ENCODE measurements at regions of chr7 and their contacts with region 1.

Region 1: DNA sequence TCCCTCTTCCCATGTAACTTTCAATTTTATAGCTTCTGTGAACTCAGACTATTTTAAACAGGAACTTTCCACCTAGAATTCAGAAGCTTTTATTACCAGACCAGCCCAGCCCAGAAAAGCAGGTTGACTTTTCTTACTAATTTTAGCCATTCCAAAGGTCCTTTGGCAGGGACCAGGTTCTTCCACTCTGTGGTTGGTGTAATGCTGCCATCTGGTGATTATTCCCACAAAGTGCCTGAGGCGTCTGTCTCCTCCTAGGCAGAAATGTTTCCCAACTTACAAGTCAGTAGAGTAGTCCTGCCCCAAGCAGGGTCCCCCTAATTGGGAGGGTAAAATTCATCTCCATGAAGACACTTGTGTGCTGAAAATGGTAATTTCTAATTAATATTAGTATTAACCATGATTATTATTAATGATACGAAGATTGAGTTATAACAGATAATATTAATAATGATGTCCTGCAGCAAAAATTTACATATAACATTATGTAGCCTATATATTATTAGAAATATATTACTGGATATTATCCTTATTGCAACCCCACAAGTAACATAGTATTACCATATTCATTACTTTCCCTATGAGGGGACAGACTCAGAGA is 53.0 kb upstream of the PPP1R17 start:
- DNase-seq: no peak
- ATAC-seq: peak; percentile 66; the same call in 2 of the 3 replicates
- H3K4me3 ChIP-seq: no peak overlapping the region
- H3K27ac ChIP-seq: no peak overlapping the region
- H3K4me1 ChIP-seq: no peaks in the 10 kb centered on the region
- H3K27me3 ChIP-seq: no peaks in the 10 kb centered on the region; a peak in 1 of 4 replicates
- CTCF ChIP-seq: peak; percentile 34 to 54 (median 48); a peak in 4 of 6 replicates
- EP300 ChIP-seq: no peak
- POLR2A ChIP-seq: no peak
- RAD21 ChIP-seq: peak; percentile 61

Region 2: GRCh38 chr7:31134246-31135188 is 499.5 kb before region 1 on chr7:
- CTCF ChIA-PET with region 1: interaction called, 9 read pairs
- POLR2A ChIA-PET with region 1: no interaction called
- RAD21 ChIA-PET with region 1: interaction called, 3 read pairs
- SMC1A ChIA-PET with region 1: interaction called, 5 read pairs
- in situ Hi-C with region 1: no loop called
- intact Hi-C with region 1: loop called (anchors 2 kb)
- DNase-seq: no peak
- ATAC-seq: peak; percentile 97
- H3K4me3 ChIP-seq: no peak overlapping the region
- H3K27ac ChIP-seq: no peak overlapping the region
- H3K4me1 ChIP-seq: no peaks in the 10 kb centered on the region
- H3K27me3 ChIP-seq: no peaks in the 10 kb centered on the region
- CTCF ChIP-seq: peak; percentile 61 to 75 (median 63)
- EP300 ChIP-seq: no peak
- POLR2A ChIP-seq: no peak
- RAD21 ChIP-seq: peak; percentile 80

Region 3: GRCh38 chr7:31373337-31374289 is 260.4 kb before region 1 on chr7:
- CTCF ChIA-PET with region 1: interaction called, 6 read pairs
- POLR2A ChIA-PET with region 1: no interaction called
- RAD21 ChIA-PET with region 1: no interaction called
- SMC1A ChIA-PET with region 1: interaction called, 3 read pairs
- in situ Hi-C with region 1: no loop called
- intact Hi-C with region 1: loop called (anchors 5 kb)
- DNase-seq: no peak
- ATAC-seq: peak; percentile 95
- H3K4me3 ChIP-seq: no peak overlapping the region
- H3K27ac ChIP-seq: no peak overlapping the region
- H3K4me1 ChIP-seq: no peaks in the 10 kb centered on the region
- H3K27me3 ChIP-seq: peaks cover 0 to 6% of the 10 kb centered on the region in 2 experiments; a peak in 1 of 4 replicates
- CTCF ChIP-seq: peak; percentile 60 to 77 (median 71)
- EP300 ChIP-seq: no peak
- POLR2A ChIP-seq: no peak
- RAD21 ChIP-seq: peak; percentile 63